ENCODE measurements at regions of chr10 and their contacts with region 1.

Region 1: GRCh38 chr10:97792141-97792721 is 20.4 kb upstream of the SFRP5 start:
- DNase-seq: peak; percentile 42 to 85 (median 72)
- ATAC-seq: peak; percentile 77
- H3K4me3 ChIP-seq: no peak overlapping the region
- H3K4me3 Mint-ChIP-seq: no peak overlapping the region
- H3K27ac ChIP-seq: no peak overlapping the region
- H3K27ac Mint-ChIP-seq: no peak overlapping the region
- H3K4me1 ChIP-seq: peaks cover 47% of the 10 kb centered on the region
- H3K4me1 Mint-ChIP-seq: peaks cover 46% of the 10 kb centered on the region
- H3K27me3 ChIP-seq: no peaks in the 10 kb centered on the region
- H3K27me3 Mint-ChIP-seq: peaks cover 3% of the 10 kb centered on the region
- CTCF ChIP-seq: peak; percentile 77

Region 2: GRCh38 chr10:97771055-97771811 is 21.0 kb before region 1 on chr10:
- CTCF ChIA-PET with region 1: interaction called, 18 read pairs
- POLR2A ChIA-PET with region 1: interaction called, 3 read pairs
- intact Hi-C with region 1: no loop called
- DNase-seq: peak in 4 of 9 experiments; percentile 17 to 59 (median 32)
- ATAC-seq: peak; percentile 61
- H3K4me3 ChIP-seq: peak overlapping the region; percentile 34 to 61
- H3K4me3 Mint-ChIP-seq: peak overlapping the region; percentile 84
- H3K27ac ChIP-seq: no peak overlapping the region
- H3K27ac Mint-ChIP-seq: no peak overlapping the region
- H3K4me1 ChIP-seq: peaks cover 13% of the 10 kb centered on the region
- H3K4me1 Mint-ChIP-seq: peaks cover 28% of the 10 kb centered on the region
- H3K27me3 ChIP-seq: peaks cover 0 to 5% of the 10 kb centered on the region in 2 experiments
- H3K27me3 Mint-ChIP-seq: peaks cover 19% of the 10 kb centered on the region
- CTCF ChIP-seq: no peak

Region 3: DNA sequence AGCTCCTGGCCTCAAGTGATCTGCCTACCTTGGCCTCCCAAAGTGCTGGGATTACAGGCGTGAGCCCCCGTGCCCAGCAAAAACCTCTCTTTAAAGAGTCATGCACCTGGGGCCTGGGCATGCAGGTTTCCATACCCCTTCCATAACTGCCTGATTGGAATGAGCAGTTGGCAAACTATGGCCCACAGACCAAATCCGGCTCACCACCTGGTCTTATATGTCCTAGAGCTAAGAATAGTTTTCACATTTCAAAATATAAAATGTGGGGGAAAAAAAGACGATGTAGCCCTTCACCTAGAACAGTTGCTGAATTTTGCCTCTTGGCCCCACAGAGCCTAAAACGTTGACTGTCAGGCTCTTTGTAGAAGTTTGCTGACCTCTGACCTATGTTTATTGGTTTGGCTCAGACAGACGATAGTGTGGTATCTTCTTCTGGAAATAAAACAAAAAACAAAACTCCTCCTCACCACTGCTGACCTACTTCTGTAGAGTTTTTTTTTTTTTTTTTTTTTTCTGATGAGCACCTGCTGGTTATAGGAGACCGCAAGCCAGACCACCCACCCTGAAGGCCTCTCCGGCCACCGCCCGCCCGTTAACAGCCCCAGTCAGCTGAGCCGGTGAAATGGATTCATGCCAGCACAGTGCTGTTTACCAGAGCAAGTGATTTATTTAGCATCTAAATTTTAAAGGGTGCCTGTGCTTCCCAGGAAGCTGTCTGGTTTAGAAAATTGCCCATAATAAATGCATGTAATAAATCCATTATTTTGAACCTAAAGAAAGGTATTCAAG is 13.1 kb after region 1 on chr10:
- CTCF ChIA-PET with region 1: interaction called, 20 read pairs
- POLR2A ChIA-PET with region 1: no interaction called
- intact Hi-C with region 1: no loop called
- DNase-seq: no peak
- ATAC-seq: no peak
- H3K4me3 ChIP-seq: no peak overlapping the region
- H3K4me3 Mint-ChIP-seq: no peak overlapping the region
- H3K27ac ChIP-seq: no peak overlapping the region
- H3K27ac Mint-ChIP-seq: no peak overlapping the region
- H3K4me1 ChIP-seq: no peaks in the 10 kb centered on the region
- H3K4me1 Mint-ChIP-seq: no peaks in the 10 kb centered on the region
- H3K27me3 ChIP-seq: no peaks in the 10 kb centered on the region
- H3K27me3 Mint-ChIP-seq: no peaks in the 10 kb centered on the region
- CTCF ChIP-seq: no peak

Region 4: DNA sequence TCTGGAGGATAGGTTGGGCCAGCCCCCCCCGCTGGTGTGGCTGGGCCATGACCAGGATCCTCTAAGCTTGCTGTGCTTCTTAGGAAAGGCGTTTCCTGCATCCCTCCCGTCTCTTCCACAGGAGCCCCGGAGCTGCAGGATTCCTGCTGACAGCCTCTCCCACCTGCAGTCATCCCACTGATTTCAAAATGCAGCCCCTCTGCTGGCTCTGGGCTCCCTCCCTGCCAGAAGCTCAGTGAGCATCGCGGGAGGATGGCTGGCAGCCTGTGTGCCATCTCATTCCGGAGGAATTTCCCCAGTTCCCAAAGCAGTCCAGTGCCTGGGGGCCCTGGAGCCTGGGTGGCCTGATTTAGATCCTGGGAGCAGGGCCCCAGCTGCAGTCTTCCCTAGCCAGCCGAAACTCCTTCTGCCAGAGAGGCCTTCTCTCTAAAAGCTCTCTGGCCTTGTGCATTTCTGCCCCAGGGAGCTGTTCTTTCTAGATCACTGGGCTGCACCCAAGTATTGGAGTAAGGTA is 35.6 kb after region 1 on chr10:
- CTCF ChIA-PET with region 1: interaction called, 18 read pairs
- POLR2A ChIA-PET with region 1: no interaction called
- intact Hi-C with region 1: no loop called
- DNase-seq: no peak
- ATAC-seq: no peak
- H3K4me3 ChIP-seq: no peak overlapping the region
- H3K4me3 Mint-ChIP-seq: no peak overlapping the region
- H3K27ac ChIP-seq: no peak overlapping the region
- H3K27ac Mint-ChIP-seq: no peak overlapping the region
- H3K4me1 ChIP-seq: peaks cover 29% of the 10 kb centered on the region
- H3K4me1 Mint-ChIP-seq: peaks cover 22% of the 10 kb centered on the region
- H3K27me3 ChIP-seq: no peaks in the 10 kb centered on the region
- H3K27me3 Mint-ChIP-seq: no peaks in the 10 kb centered on the region
- CTCF ChIP-seq: no peak

Region 5: GRCh38 chr10:97861097-97861750 is 69.0 kb after region 1 on chr10:
- CTCF ChIA-PET with region 1: interaction called, 292 read pairs
- POLR2A ChIA-PET with region 1: no interaction called
- intact Hi-C with region 1: no loop called
- DNase-seq: no peak
- ATAC-seq: no peak
- H3K4me3 ChIP-seq: no peak overlapping the region
- H3K4me3 Mint-ChIP-seq: no peak overlapping the region
- H3K27ac ChIP-seq: no peak overlapping the region
- H3K27ac Mint-ChIP-seq: no peak overlapping the region
- H3K4me1 ChIP-seq: no peaks in the 10 kb centered on the region
- H3K4me1 Mint-ChIP-seq: peaks cover 5% of the 10 kb centered on the region
- H3K27me3 ChIP-seq: no peaks in the 10 kb centered on the region
- H3K27me3 Mint-ChIP-seq: no peaks in the 10 kb centered on the region
- CTCF ChIP-seq: no peak

Measured in CD8-positive, alpha-beta T cell (primary cell).